HEK293 (cell line): ENCODE measurements at regions of chr6 and their contacts with region 1.

Region 1: DNA sequence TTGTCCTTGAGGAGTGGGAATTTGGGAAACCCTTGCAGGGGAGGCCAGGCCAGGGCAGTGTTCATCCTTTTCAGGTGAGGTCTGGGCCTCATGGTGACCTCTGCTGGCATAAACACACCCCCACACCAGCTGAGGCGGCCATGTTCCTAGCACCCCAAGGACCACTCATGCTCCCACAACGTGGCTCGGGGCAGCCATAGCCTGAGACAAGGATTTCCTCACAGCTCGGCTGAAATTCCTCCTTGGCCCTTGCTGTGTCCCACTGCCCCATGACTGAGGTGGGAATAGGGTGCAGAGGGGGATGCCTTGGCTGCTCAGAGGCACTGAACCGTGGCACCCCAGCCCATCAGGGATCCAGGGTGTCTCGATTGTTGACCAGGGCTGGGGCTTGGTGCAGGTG is 27.3 kb upstream of the SPDEF start:
- H3K4me3 ChIP-seq: no peak overlapping the region
- H3K27ac ChIP-seq: no peak overlapping the region
- H3K4me1 ChIP-seq: no peaks in the 10 kb centered on the region
- CTCF ChIP-seq: peak; percentile 63

Region 2: GRCh38 chr6:34161857-34162515 is 421.5 kb before region 1 on chr6:
- CTCF ChIA-PET with region 1: interaction called, 13 read pairs
- POLR2A ChIA-PET with region 1: no interaction called
- H3K4me3 ChIP-seq: no peak overlapping the region
- H3K27ac ChIP-seq: no peak overlapping the region
- H3K4me1 ChIP-seq: no peaks in the 10 kb centered on the region
- CTCF ChIP-seq: no peak

Region 3: DNA sequence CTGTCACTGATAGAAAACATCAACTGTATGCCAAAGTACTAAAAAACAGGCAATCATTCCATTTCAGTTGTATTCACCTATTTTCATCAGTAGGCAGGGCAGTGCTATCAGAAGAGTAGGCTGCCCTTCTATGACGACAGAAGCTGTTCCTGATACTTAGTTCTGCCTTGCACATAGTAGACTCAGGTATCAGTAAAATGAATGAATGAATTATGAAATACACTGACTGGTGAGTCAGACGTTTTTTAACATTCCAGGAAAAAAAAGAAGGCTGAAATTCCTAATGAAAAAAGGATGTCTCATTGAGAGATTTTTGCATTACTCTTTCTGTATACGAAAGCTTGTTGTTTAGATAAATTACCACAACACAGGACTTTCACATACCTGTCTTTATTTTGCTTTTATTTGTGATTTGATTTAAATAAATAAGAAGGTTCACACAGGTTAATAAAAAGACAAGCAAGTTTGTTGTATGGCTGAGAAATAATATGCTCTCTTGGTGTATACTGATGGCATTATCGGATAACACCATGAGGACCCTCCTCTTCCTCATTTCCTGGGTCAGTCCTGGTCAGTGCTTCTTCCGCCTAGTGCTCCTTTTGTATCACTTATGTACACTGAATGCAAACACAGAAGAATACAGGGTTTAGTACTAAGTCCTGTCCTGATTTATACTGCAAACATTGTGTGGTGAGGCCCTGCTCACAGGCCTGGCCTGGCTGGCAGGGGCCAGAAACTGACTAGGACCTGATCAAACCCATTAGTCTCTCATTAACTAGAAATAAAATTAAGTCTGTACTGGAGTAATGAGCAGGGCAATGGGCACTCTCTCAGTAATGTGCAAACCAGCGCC is 12.1 kb after region 1 on chr6:
- CTCF ChIA-PET with region 1: interaction called, 12 read pairs
- POLR2A ChIA-PET with region 1: interaction called, 4 read pairs
- H3K4me3 ChIP-seq: no peak overlapping the region
- H3K27ac ChIP-seq: no peak overlapping the region
- H3K4me1 ChIP-seq: no peaks in the 10 kb centered on the region
- CTCF ChIP-seq: no peak